K562 (cell line): ENCODE measurements at regions of chr1 and their contacts with region 1.

Region 1: DNA sequence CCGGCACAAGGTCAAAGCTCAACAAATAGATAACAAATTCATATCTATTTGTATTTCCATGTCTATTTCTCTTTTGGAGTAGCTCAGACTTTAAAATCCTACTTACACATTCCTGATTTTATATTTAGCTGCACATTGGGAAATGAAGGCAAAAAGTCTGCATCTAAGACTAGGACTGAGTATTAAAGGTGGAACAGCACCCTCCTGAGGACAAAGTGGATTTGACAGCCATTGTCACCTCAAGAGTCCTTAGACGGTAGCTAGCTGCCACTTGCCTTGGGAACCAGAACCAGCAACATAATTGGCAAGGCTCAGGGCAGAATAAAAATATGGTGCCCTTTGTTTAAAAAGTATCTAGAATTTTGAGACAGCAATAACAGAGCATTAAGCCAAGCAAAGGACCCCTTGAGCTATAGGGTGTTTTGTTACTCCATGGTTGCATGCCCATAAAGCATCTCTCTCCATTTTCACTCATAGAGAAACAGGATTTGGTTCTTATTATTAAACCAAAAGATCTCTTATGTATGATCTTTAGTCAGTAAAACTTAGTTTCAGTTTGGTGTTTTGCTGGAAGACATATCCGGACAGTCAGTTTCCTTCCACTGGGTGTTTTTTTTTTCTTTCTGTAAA is 30.0 kb upstream of the SGIP1 start:
- DNase-seq: peak; percentile 33 to 59 (median 34)
- ATAC-seq: peak; percentile 91
- H3K4me3 ChIP-seq: no peak overlapping the region
- H3K27ac ChIP-seq: no peak overlapping the region
- H3K4me1 ChIP-seq: no peaks in the 10 kb centered on the region
- H3K27me3 ChIP-seq: peaks cover 0 to 4% of the 10 kb centered on the region in 2 experiments; a peak in 1 of 5 replicates
- CTCF ChIP-seq: peak; percentile 53 to 74 (median 68)
- EP300 ChIP-seq: no peak
- POLR2A ChIP-seq: no peak
- RAD21 ChIP-seq: peak; percentile 40 to 66

Region 2: GRCh38 chr1:66253330-66253921 is 250.5 kb before region 1 on chr1:
- CTCF ChIA-PET with region 1: interaction called, 3 read pairs
- POLR2A ChIA-PET with region 1: no interaction called
- in situ Hi-C with region 1: no loop called
- intact Hi-C with region 1: loop called (anchors 1 kb)
- DNase-seq: peak in 2 of 4 experiments; percentile 28 to 32
- ATAC-seq: peak; percentile 81
- H3K4me3 ChIP-seq: no peak overlapping the region
- H3K27ac ChIP-seq: no peak overlapping the region
- H3K4me1 ChIP-seq: no peaks in the 10 kb centered on the region
- H3K27me3 ChIP-seq: no peaks in the 10 kb centered on the region
- CTCF ChIP-seq: peak; percentile 34 to 78 (median 60); a peak in 5 of 6 replicates
- EP300 ChIP-seq: no peak
- POLR2A ChIP-seq: no peak
- RAD21 ChIP-seq: peak; percentile 81 to 88

Region 3: DNA sequence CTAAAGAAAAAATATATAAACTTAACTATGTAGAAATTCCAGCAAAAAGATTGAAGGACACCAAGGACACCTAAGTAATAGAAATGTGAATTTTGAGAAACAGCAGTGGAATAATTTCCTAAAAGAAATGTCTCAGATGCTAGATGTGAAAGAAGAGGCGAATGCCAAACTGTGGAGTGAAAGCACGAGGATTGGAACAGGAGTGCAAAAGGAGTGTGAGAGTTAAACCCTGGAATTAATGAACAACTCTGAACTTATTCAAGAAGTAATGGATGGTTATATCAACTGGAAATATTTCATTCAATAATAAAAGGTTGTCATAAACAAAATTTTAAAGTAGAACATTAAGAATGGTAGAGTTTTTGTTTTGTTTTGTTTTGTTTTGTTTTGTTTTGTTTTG is 48.5 kb before region 1 on chr1:
- CTCF ChIA-PET with region 1: no interaction called
- POLR2A ChIA-PET with region 1: interaction called, 4 read pairs
- in situ Hi-C with region 1: no loop called
- intact Hi-C with region 1: loop called (anchors 5 kb)
- DNase-seq: no peak
- ATAC-seq: no peak
- H3K4me3 ChIP-seq: no peak overlapping the region
- H3K27ac ChIP-seq: no peak overlapping the region
- H3K4me1 ChIP-seq: no peaks in the 10 kb centered on the region
- H3K27me3 ChIP-seq: no peaks in the 10 kb centered on the region; a peak in 1 of 5 replicates
- CTCF ChIP-seq: no peak
- EP300 ChIP-seq: no peak
- POLR2A ChIP-seq: no peak
- RAD21 ChIP-seq: no peak

Region 4: DNA sequence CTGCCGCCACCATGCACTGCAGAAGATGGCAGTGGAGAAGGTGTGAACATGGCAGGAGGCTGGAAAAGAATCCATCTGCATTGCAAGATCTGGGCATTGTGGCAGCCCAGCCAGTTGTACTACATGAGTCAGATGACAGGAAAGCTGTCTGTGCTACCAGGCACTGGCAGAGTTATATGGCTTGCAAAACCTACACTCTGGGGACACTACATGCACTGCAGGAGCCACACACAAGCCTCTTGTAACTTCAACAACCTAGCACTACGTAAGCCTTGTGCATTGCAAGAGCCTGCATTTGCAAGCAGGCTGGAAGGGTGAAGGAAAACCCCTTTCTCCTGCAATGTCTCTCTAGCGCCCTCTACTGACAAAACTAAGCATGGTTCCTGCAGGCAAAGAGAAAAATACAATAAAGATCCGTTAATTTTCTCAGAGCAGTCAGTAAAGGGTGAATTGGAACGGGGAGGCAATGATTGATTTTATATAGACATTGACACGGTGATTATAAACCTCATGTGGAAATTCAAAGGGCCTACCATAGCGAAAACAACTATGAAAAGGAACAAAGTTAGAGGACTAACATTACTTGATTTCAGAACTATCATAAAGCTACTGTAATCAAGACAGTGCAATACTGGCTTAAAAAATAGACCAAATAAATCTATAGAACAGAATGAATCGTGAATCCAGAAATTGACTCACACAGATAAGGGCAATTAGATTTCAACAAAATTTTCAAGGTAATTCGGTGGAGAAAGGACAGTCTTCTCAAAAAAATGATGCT is 222.1 kb after region 1 on chr1:
- CTCF ChIA-PET with region 1: no interaction called
- POLR2A ChIA-PET with region 1: no interaction called
- in situ Hi-C with region 1: no loop called
- intact Hi-C with region 1: loop called (anchors 10 kb)
- DNase-seq: peak; percentile 34 to 73 (median 45)
- ATAC-seq: peak; percentile 92
- H3K4me3 ChIP-seq: no peak overlapping the region
- H3K27ac ChIP-seq: no peak overlapping the region
- H3K4me1 ChIP-seq: no peaks in the 10 kb centered on the region
- H3K27me3 ChIP-seq: peaks cover 0 to 9% of the 10 kb centered on the region in 2 experiments; a peak in 3 of 5 replicates
- CTCF ChIP-seq: peak; percentile 76 to 91 (median 86)
- EP300 ChIP-seq: no peak
- POLR2A ChIP-seq: no peak
- RAD21 ChIP-seq: peak; percentile 53 to 72